Activated CD4-positive, alpha-beta T cell treated with anti-CD3 and anti-CD28 coated beads for 36 hours (primary cell): ENCODE measurements at regions of chr18 and their contacts with region 1.

Region 1: DNA sequence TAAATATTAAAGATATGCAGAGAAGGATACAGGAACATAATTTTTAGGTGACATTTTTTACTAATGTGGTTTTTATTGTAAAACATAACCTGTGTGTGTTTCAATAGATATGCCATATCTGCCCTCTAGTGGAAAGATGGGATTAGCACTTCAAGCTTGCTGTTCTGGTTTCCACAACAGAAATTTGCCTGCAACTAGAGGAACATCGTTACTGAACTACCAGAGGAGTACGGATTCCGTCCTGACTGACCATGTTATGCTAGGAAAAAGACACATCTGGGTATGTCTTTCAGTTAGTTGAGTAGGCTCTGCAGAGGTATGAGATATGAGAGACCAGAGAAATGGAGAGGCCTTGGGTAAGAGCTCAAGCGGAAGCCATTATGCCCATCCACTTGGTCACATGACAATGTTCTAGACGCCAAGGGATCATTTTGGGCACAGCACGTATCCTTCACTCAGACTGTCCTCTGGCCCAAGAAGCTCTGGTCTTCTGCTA is 104.9 kb downstream of the MBD2 start:
- DNase-seq: peak; percentile 20
- ATAC-seq: peak; percentile 80
- H3K4me3 Mint-ChIP-seq: peak overlapping the region; percentile 14
- H3K27ac Mint-ChIP-seq: peak overlapping the region; percentile 73
- H3K4me1 Mint-ChIP-seq: peaks cover 2% of the 10 kb centered on the region
- H3K27me3 Mint-ChIP-seq: peaks cover 6% of the 10 kb centered on the region

Region 2: DNA sequence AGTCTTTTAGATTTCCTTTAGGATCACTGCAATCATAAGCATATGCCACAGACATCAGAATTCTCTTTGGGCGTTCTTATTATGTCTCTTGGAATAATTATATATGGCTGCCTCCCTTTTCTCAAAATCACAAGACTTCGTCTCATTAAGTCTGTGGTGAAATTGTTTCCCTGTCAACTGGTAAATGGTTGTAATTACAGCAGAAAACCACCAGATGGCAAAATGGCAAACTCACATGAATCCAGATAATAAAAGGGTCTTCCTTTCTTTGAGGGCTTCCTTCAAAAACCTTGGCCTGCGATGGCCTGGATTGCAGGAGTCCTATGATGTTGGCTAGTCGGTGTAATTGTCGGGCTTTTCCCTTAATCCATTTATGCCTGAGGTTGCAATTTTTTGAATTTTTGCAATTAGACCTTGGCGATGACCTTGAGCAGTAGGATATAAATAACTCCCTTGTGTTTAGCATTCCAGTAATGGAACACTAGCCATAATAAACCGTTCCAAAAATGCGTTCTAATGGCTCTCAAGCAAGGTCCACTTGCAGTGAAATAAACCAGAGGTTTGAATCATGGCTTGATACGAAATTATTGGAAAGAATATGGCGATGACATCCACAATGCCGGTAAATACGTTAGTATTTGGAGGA is 551.5 kb before region 1 on chr18:
- CTCF ChIA-PET with region 1: interaction called, 14 read pairs
- POLR2A ChIA-PET with region 1: interaction called, 4 read pairs
- intact Hi-C with region 1: loop called (anchors 1 kb)
- DNase-seq: no peak
- ATAC-seq: no peak
- H3K4me3 Mint-ChIP-seq: no peak overlapping the region
- H3K27ac Mint-ChIP-seq: no peak overlapping the region
- H3K4me1 Mint-ChIP-seq: no peaks in the 10 kb centered on the region
- H3K27me3 Mint-ChIP-seq: peaks cover 2% of the 10 kb centered on the region

Region 3: GRCh38 chr18:53698907-53699306 is 420.7 kb before region 1 on chr18:
- CTCF ChIA-PET with region 1: interaction called, 5 read pairs
- POLR2A ChIA-PET with region 1: no interaction called
- intact Hi-C with region 1: loop called (anchors 2 kb)
- DNase-seq: peak; percentile 14
- ATAC-seq: no peak
- H3K4me3 Mint-ChIP-seq: no peak overlapping the region
- H3K27ac Mint-ChIP-seq: no peak overlapping the region
- H3K4me1 Mint-ChIP-seq: no peaks in the 10 kb centered on the region
- H3K27me3 Mint-ChIP-seq: peaks cover 3% of the 10 kb centered on the region

Region 4: GRCh38 chr18:53909668-53910067 is 209.9 kb before region 1 on chr18:
- CTCF ChIA-PET with region 1: interaction called, 14 read pairs
- POLR2A ChIA-PET with region 1: no interaction called
- intact Hi-C with region 1: loop called (anchors 1 to 2 kb)
- DNase-seq: peak; percentile 43
- ATAC-seq: no peak
- H3K4me3 Mint-ChIP-seq: no peak overlapping the region
- H3K27ac Mint-ChIP-seq: no peak overlapping the region
- H3K4me1 Mint-ChIP-seq: no peaks in the 10 kb centered on the region
- H3K27me3 Mint-ChIP-seq: peaks cover 2% of the 10 kb centered on the region

Region 5: DNA sequence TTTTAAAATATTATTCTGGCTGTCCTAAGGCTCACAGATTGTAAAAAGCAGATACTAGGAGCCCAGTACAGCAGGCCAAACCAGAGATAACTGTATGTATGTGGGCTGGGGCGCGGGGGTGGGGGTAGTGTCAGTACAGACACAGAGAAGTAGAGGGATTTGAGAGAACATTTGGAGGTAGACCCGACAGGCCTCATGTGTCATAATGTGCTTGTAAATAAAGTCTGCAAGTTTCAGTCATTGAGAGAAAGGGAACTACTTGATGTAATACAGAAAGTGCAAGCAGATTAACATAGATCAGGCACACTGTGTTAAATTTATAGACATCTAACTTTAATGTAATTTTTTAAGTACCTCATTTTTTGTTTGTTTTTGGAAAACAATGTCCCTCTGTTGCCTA is 142.3 kb after region 1 on chr18:
- CTCF ChIA-PET with region 1: no interaction called
- POLR2A ChIA-PET with region 1: no interaction called
- intact Hi-C with region 1: no loop called
- DNase-seq: peak; percentile 82
- ATAC-seq: peak; percentile 71
- H3K4me3 Mint-ChIP-seq: peak overlapping the region; percentile 52
- H3K27ac Mint-ChIP-seq: peak overlapping the region; percentile 90
- H3K4me1 Mint-ChIP-seq: peaks cover 54% of the 10 kb centered on the region
- H3K27me3 Mint-ChIP-seq: no peaks in the 10 kb centered on the region